ENCODE measurements at regions of chr5 and their contacts with region 1.

Region 1: DNA sequence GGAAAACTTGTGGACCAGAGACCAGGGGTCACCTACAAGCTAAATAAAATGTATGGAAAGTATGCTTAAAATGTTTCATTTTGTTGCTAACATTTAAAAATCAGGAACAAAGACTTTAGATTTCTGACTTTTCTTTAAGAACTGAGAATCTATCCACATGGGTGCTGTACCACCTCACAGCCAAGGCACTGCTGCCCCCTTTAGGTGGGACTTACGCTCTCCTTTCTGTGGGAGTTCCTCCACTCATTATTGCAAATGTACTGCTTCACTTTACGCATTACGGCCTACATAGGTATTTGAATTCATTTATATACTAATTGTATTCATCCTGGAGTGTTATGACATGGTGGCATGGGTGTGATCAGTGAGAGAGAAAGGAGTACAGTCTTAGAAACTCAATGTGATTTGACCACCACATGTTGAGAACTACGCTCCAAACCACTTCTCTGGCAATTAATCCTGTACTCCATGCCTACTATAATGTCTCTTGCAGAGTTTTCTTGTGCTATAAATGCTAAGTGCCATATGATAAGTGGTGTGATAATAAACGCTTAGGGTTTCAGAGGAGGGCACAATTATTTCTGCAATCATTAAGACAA is 24.7 kb upstream of the CETN3 start:
- DNase-seq: no peak
- ATAC-seq: peak in 1 of 2 donors; percentile 42

Region 2: DNA sequence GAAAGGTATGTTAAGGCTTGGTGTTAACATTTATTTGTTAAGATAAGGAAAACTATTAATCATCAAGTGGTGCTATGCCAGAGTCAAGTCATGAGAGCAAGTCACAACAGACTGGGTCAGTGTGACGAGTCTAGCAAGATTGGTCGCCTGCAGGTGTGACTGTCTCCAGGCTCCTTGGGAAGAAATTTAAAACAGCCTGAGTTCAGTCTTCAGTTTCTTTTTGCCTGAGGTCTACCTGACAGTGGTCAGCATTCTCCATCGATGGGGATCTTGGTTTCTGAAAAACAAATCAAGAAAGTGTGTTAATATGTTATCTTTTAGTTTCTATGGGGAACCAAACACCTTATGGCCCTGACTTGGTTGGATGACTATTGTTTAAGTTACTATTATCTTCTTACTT is 81.0 kb before region 1 on chr5:
- intact Hi-C with region 1: no loop called
- DNase-seq: no peak
- ATAC-seq: no peak

Region 3: DNA sequence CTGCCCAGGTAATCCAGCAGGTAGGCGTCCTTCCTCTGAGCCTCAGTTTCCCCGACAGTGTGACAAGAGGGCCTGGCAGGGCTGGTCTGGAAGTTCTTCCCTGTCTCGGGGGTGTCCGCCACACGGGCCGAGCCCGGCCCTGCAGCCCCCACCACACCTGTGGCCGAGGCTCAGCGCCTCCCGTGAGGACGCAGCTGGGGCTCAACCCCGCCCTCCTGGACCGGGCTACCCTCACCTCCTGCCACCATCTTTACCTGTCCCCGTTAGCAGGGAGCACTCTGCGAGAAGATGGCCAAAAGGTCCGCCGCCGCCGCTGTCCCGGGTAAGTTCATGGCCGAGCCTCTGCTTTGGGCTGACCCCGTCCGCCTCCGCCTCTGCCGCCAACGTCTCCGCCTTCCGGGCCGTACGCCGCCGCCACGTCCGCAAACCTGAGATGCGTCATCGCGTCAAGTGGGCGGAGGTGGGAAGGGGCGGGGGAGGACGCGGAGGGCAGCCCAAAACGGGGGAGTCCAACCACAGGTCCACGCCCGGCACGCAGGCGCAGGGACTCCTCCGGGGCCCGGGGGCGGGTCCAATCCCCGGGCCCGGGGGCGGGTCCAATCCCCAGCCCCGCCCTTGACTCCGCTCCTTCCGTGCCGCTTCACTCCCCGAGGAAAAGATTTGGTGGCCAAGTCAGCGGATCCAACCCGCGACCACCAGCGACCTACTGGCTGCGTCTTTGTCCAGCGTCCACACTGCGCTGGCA is 95.2 kb after region 1 on chr5 and contains the start of gene LYSMD3:
- intact Hi-C with region 1: loop called in 1 of 2 experiments (anchors 10 kb)
- DNase-seq: peak; percentile 98
- ATAC-seq: peak; percentile 99 to 100
- total RNA-seq, gene LYSMD3: 17.3 to 30.0 TPM

Region 4: GRCh38 chr5:90606539-90606938 is 172.3 kb after region 1 on chr5:
- intact Hi-C with region 1: loop called in 1 of 2 experiments (anchors 10 kb)
- DNase-seq: no peak
- ATAC-seq: no peak